GM10248 (cell line): ENCODE measurements at regions of chr17 and their contacts with region 1.

Region 1: DNA sequence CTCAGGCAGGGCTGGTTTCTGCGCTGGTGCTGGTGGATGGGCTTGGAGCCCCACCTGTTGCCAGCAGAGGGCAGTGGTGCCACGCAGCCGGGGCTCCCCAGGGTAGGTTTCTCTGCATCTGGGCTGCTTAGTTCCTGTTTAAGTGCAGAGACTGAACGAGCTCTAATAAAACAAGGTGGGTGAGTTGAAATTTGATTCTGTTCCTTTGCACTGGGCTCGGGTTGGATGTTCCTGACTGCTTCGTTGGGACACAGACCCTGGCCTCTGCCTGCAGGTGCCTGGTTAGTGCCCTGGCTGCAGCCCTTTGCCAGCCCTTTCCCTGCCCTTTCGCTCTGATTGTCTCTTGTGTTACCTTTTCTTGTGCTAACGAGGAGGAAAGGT is 30.0 kb downstream of the TBCD start:
- DNase-seq: peak; percentile 93
- CTCF ChIP-seq: peak; percentile 98

Region 2: GRCh38 chr17:82668631-82669099 is 113.2 kb before region 1 on chr17:
- CTCF ChIA-PET with region 1: interaction called, 15 read pairs
- POLR2A ChIA-PET with region 1: no interaction called
- DNase-seq: peak; percentile 83
- CTCF ChIP-seq: peak; percentile 66

Region 3: GRCh38 chr17:82767041-82767754 is 14.7 kb before region 1 on chr17:
- CTCF ChIA-PET with region 1: interaction called, 17 read pairs
- POLR2A ChIA-PET with region 1: no interaction called
- DNase-seq: peak; percentile 67
- CTCF ChIP-seq: peak; percentile 58

Region 4: GRCh38 chr17:82863941-82864774 is 82.3 kb after region 1 on chr17:
- CTCF ChIA-PET with region 1: interaction called, 11 read pairs
- POLR2A ChIA-PET with region 1: no interaction called
- DNase-seq: peak; percentile 87
- CTCF ChIP-seq: no peak

Region 5: DNA sequence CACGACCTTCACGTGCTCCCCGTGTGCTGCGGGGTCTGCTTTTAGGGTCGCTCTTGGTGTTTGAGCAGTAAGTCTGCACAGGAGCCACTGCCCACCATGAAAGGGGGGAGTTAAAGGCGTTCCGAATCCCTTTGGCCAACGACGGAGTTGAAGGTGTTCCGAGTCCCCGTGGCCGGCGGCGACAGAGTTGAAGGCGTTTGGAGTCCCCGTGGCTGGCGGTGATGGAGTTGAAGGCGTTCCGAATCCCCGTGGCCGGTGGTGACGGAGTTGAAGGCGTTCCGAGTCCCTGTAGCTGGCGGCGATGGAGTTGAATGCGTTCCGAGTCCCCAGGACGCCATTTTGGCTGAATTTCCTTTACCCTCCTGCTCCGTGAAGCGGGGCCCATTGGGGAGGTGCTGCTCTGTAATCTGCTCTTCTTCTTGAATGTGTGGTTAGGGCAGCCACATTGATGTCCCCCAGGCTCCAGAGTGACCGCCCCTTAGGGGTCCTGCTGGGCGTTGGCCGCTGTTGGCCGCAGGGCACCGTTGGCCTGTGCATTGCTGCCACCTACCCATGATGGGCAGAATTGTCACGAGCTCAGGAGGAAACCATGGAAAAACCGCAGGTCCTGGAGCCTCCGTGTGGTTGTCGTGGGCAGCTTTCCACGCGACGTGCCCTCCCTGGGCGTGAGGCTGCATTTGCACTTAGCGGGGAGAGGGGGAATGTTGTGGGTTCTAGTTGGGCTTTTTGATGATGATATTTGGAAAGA is 131.6 kb after region 1 on chr17:
- CTCF ChIA-PET with region 1: interaction called, 27 read pairs
- POLR2A ChIA-PET with region 1: no interaction called
- DNase-seq: no peak
- CTCF ChIP-seq: peak; percentile 21

Region 6: DNA sequence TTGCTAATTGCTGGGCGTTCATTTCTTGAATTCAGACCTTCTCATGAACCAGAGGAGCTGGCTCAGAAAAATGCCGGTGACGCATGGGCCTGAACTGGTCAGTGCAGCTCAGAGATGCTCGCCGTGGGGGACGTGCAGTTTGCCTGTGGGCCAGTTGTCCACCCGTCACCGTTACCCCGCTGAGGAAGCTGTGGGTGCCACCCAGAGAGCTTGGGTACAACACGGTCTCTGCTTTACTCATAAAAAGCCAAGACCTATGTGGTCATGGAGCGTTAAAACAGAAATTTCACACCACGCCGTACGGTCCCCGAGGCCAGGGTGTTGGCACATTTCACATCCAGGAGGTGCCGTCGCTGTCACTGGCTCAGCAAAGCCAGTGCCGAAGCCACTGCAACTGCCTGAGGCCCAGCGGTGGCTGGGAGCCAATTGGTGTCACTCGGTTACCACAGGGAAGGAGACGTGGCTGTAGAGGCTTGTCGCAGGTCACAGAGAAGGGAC is 418.4 kb after region 1 on chr17:
- CTCF ChIA-PET with region 1: interaction called, 19 read pairs
- POLR2A ChIA-PET with region 1: no interaction called
- DNase-seq: no peak
- CTCF ChIP-seq: no peak